Ascending aorta (tissue), 2 donors: ENCODE measurements at regions of chr7 and their contacts with region 1.

Region 1: DNA sequence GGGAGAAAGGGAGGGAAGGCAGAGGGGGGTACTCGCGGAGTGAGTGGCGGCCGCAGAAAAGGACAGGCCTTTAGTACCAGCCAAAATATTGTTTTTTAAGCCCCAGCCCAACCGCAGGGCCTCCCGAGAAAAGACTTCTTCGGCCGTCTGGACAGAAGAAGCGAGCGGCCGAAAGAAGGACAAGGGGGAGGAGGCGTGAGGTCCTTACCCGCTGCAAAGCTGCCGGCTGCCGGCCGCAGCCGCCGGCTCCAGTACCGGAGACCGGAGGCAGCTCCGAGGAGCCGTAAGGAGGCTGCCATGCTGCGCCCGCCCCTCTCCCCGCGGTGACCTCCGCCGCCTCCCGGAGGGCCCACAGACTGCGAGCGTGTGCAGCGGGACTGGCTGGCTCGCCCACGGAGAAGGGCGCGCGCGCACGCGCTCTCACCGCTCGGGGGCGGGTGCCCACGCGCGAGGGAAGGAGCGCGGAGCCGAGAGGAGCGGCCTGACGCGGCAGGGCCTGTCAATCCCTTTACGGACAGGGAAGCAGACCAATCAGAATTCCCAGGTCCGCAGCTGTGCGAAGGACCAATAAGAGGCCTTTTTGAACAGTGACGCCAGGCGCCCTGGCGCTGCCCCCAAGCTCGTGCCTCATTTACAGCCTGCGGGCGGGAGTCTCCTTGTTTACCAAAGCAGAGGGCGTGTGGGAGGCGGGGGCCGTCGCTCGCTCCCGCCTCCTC is at the start of gene HIBADH:
- DNase-seq: peak; percentile 99 to 100
- H3K4me3 ChIP-seq: peak within 1 kb of the TSS; percentile 76 to 92
- H3K27ac ChIP-seq: peak within 1 kb of the TSS; percentile 79 to 91
- H3K4me1 ChIP-seq: peaks cover 0 to 3% of the 10 kb centered on the region in 2 donors
- H3K27me3 ChIP-seq: no peaks in the 10 kb centered on the region
- CTCF ChIP-seq: peak in 2 of 3 experiments; percentile 18 to 23
- total RNA-seq, gene HIBADH: 10.6 TPM

Region 2: GRCh38 chr7:27532314-27532713 is 130.3 kb before region 1 on chr7:
- intact Hi-C with region 1: no loop called
- DNase-seq: no peak
- H3K4me3 ChIP-seq: no peak overlapping the region
- H3K27ac ChIP-seq: no peak overlapping the region
- H3K4me1 ChIP-seq: no peaks in the 10 kb centered on the region
- H3K27me3 ChIP-seq: no peaks in the 10 kb centered on the region
- CTCF ChIP-seq: no peak

Region 3: DNA sequence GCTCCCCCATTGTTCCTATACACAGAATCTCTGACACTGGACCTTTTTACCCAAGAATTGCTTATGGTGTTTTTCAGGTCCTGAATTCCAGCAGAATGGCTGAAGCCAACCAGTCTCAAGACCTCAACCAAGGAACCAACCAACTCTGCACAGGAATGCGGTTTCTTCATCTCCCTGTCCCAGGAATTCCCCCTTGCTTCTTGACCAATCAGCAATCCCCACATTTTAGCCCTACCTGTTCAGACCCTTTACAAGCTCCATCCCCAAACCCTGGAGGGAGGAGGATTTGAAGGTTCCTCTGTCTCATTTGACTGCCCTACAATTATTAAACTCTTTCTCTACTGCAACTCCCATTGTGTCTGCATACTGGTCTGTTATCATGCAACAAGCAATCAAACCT is 35.5 kb before region 1 on chr7:
- intact Hi-C with region 1: no loop called
- DNase-seq: no peak
- H3K4me3 ChIP-seq: no peak overlapping the region
- H3K27ac ChIP-seq: no peak overlapping the region
- H3K4me1 ChIP-seq: no peaks in the 10 kb centered on the region
- H3K27me3 ChIP-seq: no peaks in the 10 kb centered on the region
- CTCF ChIP-seq: no peak

Region 4: DNA sequence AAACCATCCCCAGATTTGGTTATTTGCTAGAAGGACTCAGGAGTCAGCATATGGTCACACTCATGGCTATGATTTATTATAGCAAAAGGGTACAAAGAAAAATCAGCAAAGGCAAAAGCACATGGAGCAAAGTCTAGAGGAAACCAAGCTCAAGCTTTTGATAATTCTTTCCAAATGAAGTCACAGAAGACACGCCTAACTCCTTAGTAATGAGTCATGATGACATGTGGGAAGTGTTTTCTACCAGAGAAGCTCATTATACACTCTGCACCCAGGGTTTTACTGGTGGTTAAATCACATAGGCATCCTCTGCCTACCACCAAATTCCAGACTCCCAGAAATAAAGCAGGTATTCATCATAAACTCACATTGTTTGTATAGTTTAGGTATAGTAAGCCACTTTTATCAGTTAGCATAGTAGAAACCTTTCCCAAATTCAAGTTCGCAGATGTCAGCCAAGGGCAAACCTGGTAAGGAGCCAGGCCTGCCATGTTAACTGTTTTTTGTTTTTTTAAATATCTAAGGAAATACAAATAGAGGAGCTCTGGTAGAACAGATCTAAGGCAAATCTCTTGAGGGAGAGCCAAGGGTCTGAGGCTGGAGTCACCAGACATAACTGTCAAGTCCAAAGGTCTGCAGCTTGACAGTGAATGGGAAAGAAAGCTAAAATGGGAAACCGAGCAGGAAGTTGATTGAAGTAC is 15.4 kb after region 1 on chr7:
- intact Hi-C with region 1: loop called (anchors 1 kb)
- DNase-seq: no peak
- H3K4me3 ChIP-seq: no peak overlapping the region
- H3K27ac ChIP-seq: peak overlapping the region; percentile 73 to 86
- H3K4me1 ChIP-seq: peaks cover 0 to 8% of the 10 kb centered on the region in 2 donors
- H3K27me3 ChIP-seq: no peaks in the 10 kb centered on the region
- CTCF ChIP-seq: no peak

Region 5: GRCh38 chr7:28037220-28038010 is 374.8 kb after region 1 on chr7:
- intact Hi-C with region 1: loop called (anchors 5 kb)
- DNase-seq: no peak
- H3K4me3 ChIP-seq: no peak overlapping the region
- H3K27ac ChIP-seq: peak overlapping the region; percentile 56 to 72
- H3K4me1 ChIP-seq: peaks cover 13 to 26% of the 10 kb centered on the region in 2 donors
- H3K27me3 ChIP-seq: no peaks in the 10 kb centered on the region
- CTCF ChIP-seq: no peak

Region 6: GRCh38 chr7:28408960-28409715 is 746.5 kb after region 1 on chr7:
- intact Hi-C with region 1: loop called (anchors 10 kb)
- DNase-seq: peak; percentile 91 to 99
- H3K4me3 ChIP-seq: peak overlapping the region; percentile 59 to 86
- H3K27ac ChIP-seq: peak overlapping the region; percentile 89 to 91
- H3K4me1 ChIP-seq: peaks cover 6 to 27% of the 10 kb centered on the region in 2 donors
- H3K27me3 ChIP-seq: no peaks in the 10 kb centered on the region
- CTCF ChIP-seq: no peak